ENCODE measurements at regions of chr7 and their contacts with region 1.

Region 1: GRCh38 chr7:134458806-134459698 is at the start of gene AKR1B1:
- DNase-seq: peak; percentile 95
- ATAC-seq: peak; percentile 96
- H3K4me3 Mint-ChIP-seq: peak within 1 kb of the TSS; percentile 87
- H3K27ac Mint-ChIP-seq: no peak within 1 kb of the TSS
- H3K4me1 Mint-ChIP-seq: peaks cover 22% of the 10 kb centered on the region
- H3K27me3 Mint-ChIP-seq: peaks cover 19% of the 10 kb centered on the region
- CTCF ChIP-seq: no peak
- total RNA-seq, gene AKR1B1: 135 to 148 TPM (median 147 TPM) in 3 replicates

Region 2: GRCh38 chr7:134480736-134481135 is 21.7 kb after region 1 on chr7:
- CTCF ChIA-PET with region 1: interaction called, 14 read pairs
- POLR2A ChIA-PET with region 1: interaction called, 4 read pairs
- DNase-seq: no peak
- ATAC-seq: peak; percentile 76
- H3K4me3 Mint-ChIP-seq: no peak overlapping the region
- H3K27ac Mint-ChIP-seq: no peak overlapping the region
- H3K4me1 Mint-ChIP-seq: peaks cover 14% of the 10 kb centered on the region
- H3K27me3 Mint-ChIP-seq: no peaks in the 10 kb centered on the region
- CTCF ChIP-seq: no peak

Region 3: DNA sequence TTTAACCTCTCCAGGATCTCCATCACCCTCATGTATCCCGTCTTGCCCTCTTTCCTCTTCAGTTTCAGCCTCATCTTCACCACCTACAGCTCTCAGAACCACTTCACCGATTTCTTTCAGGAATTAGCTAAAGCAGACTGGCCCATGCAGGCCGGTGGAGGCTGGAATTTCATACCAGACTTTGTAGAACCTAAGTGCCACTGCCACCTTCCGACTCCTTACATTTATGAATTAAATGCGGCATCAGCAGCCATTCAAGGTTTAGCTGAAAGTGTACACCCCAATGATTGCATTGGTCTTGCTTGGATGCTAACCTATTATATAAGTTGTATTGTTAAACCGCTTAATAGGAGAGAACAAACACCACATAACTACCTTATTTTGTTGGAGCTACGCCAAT is 32.9 kb after region 1 on chr7:
- CTCF ChIA-PET with region 1: no interaction called
- POLR2A ChIA-PET with region 1: no interaction called
- DNase-seq: no peak
- ATAC-seq: no peak
- H3K4me3 Mint-ChIP-seq: no peak overlapping the region
- H3K27ac Mint-ChIP-seq: no peak overlapping the region
- H3K4me1 Mint-ChIP-seq: no peaks in the 10 kb centered on the region
- H3K27me3 Mint-ChIP-seq: peaks cover 1% of the 10 kb centered on the region
- CTCF ChIP-seq: no peak

Region 4: DNA sequence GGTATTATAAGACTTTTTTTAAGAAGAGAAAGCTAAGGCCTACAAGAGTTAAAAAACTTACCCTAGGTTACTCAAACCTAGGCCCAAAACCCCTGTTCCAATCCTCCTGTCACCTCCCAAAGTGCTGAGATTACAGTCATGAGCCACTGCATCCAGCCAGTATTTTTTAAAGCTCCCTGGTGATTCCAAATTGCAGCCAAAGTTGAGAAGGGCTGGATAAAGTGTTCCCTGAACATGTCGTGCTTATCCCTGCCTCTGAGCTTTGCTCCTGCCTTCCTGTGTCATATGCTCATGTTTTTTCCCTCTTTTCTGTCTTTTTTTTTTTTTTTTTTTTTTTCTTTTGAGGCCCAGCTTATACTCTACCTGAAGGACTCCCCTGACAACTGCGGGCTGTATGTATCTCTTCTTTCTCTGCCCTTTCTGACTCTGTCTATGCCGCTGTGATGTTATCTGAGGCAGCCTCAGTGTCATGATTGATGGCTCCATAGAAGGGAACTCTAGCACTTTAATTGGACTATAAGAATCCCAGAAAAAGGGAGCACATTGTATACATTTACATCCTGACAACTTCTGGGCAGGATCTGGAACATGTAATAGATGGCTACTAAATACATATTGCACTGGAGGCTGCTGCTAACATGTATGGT is 76.3 kb after region 1 on chr7:
- CTCF ChIA-PET with region 1: no interaction called
- POLR2A ChIA-PET with region 1: no interaction called
- DNase-seq: no peak
- ATAC-seq: no peak
- H3K4me3 Mint-ChIP-seq: no peak overlapping the region
- H3K27ac Mint-ChIP-seq: no peak overlapping the region
- H3K4me1 Mint-ChIP-seq: no peaks in the 10 kb centered on the region
- H3K27me3 Mint-ChIP-seq: no peaks in the 10 kb centered on the region; the same call in 1 of the 2 replicates
- CTCF ChIP-seq: no peak